Activated CD4-positive, alpha-beta memory T cell treated with anti-CD3 and anti-CD28 coated beads, Interleukin-2, amount 10 ng/mL, durations not matched to agents 7 days and 5 days (primary cell): ENCODE measurements at regions of chr5 and their contacts with region 1.

Region 1: DNA sequence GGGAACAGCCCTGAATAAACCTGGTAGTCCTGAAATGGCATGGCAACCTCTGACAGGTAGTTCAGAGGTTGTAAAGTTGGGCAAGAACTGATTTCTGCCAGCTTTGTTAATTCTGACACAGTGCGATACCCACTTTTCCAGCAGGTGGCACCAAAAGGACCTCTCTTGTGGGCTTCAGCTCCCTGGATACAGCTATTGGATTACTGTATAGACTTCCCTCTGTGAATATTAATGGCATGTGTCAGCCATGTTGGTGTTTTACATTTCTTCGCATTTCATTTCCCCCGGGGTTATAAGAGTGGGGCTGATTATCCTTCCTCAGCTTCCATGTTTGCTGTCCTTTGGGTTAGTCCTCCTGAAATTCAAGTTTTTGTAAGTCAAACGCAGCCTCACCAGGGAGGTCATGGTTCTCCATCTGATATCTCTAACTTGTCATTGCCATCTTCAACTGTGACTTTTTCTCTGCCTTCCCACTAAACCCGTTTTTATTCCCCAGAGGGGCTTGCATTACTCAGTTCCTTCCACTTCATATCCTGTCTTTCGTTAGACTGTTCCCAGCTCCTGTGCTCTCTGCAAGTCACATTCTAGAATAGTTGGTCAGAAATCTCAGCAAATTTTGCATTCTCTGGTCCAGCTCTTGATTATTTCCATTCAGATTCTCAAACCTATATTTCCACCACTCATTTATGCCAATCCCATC is 135.6 kb downstream of the LIFR start:
- DNase-seq: peak; percentile 41
- H3K4me3 Mint-ChIP-seq: no peak overlapping the region
- H3K27ac Mint-ChIP-seq: no peak overlapping the region
- H3K4me1 Mint-ChIP-seq: no peaks in the 10 kb centered on the region
- H3K27me3 Mint-ChIP-seq: peaks cover 33% of the 10 kb centered on the region

Region 2: GRCh38 chr5:38410304-38410990 is 10.4 kb before region 1 on chr5:
- CTCF ChIA-PET with region 1: interaction called, 11 read pairs
- POLR2A ChIA-PET with region 1: no interaction called
- DNase-seq: no peak
- H3K4me3 Mint-ChIP-seq: no peak overlapping the region
- H3K27ac Mint-ChIP-seq: no peak overlapping the region
- H3K4me1 Mint-ChIP-seq: no peaks in the 10 kb centered on the region
- H3K27me3 Mint-ChIP-seq: peaks cover 9% of the 10 kb centered on the region

Region 3: DNA sequence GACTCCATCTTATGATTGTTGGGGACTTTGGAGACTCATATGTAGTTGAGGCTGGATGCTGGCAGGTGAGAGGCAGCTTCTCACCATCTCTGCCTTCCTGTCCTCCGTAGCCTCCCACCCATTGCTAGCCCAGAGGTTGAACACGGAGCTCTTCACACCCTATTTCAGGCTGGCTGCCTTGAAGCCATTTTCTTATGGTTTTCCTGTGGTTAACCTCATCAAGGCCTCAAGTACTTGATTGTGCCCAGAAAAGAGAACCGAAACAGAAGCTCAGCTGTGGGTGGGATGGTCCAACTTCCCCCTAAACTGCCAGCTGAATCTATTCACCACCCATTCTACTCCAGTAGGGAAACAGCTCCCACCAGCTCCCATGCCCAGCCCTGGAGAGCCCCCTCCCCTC is 32.7 kb after region 1 on chr5:
- CTCF ChIA-PET with region 1: interaction called, 10 read pairs
- POLR2A ChIA-PET with region 1: no interaction called
- DNase-seq: peak; percentile 73
- H3K4me3 Mint-ChIP-seq: no peak overlapping the region
- H3K27ac Mint-ChIP-seq: peak overlapping the region; percentile 58
- H3K4me1 Mint-ChIP-seq: peaks cover 25% of the 10 kb centered on the region
- H3K27me3 Mint-ChIP-seq: peaks cover 86% of the 10 kb centered on the region

Region 4: DNA sequence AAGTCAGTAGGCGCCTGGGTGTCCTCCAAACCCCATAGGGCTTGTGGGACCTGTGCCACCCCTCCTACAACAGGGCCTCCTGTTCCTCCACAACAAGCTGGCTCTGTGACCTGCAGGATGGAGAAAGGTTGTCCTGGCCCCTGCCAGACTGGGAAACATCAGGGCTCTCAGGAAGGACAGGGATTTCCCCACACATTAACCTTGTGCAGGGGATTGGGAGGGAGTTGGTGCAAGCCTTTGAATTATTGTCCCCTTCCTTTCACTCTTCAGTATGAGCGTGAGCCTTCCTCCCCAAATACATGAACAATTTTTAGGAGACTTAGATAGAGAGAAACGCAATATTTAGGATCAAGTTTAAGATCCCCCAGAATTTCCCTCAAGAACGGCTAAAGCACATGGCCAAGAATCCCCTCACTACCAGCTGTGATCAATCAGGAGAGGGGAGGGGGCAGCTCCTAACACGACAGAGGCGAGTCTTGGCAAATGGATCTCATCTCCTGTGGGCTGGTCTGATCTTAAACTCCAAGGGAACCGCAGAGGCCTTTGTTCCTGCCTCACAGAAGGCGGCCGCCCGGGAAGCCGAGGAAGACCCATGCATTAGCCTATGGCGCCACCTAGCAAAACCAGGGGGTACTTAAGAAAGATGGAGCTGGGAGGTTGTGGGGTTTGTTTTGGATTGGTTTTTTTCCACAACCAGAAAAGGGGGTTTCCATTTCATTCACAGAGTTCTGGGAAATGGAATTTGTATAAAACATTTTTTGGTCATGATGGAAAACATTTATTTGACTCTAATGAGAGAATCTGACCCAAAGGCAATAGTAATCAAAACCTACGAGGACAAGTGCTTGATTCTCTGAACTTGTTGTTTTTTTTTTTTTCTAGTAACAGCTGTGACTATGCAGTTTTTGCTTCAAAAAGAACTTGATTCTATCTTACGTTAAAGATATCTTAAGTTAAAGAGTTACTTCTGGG is 388.8 kb after region 1 on chr5:
- CTCF ChIA-PET with region 1: interaction called, 50 read pairs
- POLR2A ChIA-PET with region 1: no interaction called
- DNase-seq: peak; percentile 67
- H3K4me3 Mint-ChIP-seq: no peak overlapping the region
- H3K27ac Mint-ChIP-seq: no peak overlapping the region
- H3K4me1 Mint-ChIP-seq: peaks cover 15% of the 10 kb centered on the region
- H3K27me3 Mint-ChIP-seq: peaks cover 13% of the 10 kb centered on the region